SK-N-SH (cell line): ENCODE measurements at regions of chr11 and their contacts with region 1.

Region 1: GRCh38 chr11:112113539-112114457 is 27.1 kb downstream of the SDHD start:
- DNase-seq: peak; percentile 64
- H3K4me3 ChIP-seq: peak overlapping the region in 1 of 2 experiments; percentile 38; a peak in 1 of 4 replicates
- H3K27ac ChIP-seq: no peak overlapping the region
- H3K4me1 ChIP-seq: peaks cover 0 to 4% of the 10 kb centered on the region in 2 experiments; a peak in 1 of 4 replicates
- H3K27me3 ChIP-seq: no peaks in the 10 kb centered on the region
- CTCF ChIP-seq: peak; percentile 73
- EP300 ChIP-seq: no peak
- RAD21 ChIP-seq: peak; percentile 76

Region 2: DNA sequence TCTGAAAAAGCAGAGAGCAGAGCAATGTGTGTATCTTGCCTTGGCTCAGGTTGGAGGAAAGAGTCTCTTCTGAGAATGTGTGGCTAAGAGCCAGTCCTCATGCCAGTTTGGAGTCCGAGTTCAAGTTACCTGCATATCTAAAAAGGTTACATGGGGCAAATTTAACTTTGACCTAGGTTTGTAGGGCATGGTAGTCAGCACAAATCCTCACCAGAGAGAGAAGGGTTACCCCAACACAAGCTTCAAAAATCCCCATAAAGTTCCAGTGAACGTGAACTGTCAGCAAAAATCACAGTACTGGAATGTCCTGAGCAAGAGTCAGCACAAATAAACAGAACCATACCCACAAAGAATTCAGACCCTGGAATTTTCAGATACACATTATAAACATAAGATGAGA is 13.3 kb before region 1 on chr11:
- CTCF ChIA-PET with region 1: interaction called, 25 read pairs
- POLR2A ChIA-PET with region 1: no interaction called
- DNase-seq: no peak
- H3K4me3 ChIP-seq: no peak overlapping the region
- H3K27ac ChIP-seq: no peak overlapping the region
- H3K4me1 ChIP-seq: no peaks in the 10 kb centered on the region
- H3K27me3 ChIP-seq: no peaks in the 10 kb centered on the region
- CTCF ChIP-seq: no peak
- EP300 ChIP-seq: no peak
- RAD21 ChIP-seq: no peak

Region 3: DNA sequence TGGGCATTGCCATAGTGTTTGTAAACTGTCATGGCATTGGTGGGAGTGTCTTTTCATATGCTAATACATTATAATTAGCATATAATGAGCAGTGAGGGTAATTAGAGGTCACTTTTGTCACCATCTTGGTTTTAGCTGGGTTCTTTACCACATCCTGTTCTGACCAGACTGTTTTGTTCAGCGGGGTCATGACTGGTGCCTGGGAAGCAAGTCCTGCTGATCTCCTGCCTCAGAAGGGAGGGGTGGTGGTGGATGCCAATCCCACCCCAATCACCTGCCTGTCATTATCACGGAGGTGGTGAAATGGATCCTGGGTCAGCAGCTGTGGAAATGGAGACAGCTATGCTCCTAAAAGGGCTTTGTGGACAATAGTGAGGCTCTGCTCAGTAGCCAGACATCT is 18.9 kb after region 1 on chr11:
- CTCF ChIA-PET with region 1: interaction called, 15 read pairs
- POLR2A ChIA-PET with region 1: no interaction called
- DNase-seq: no peak
- H3K4me3 ChIP-seq: no peak overlapping the region
- H3K27ac ChIP-seq: no peak overlapping the region
- H3K4me1 ChIP-seq: peaks cover 5 to 11% of the 10 kb centered on the region in 2 experiments; a peak in 3 of 4 replicates
- H3K27me3 ChIP-seq: no peaks in the 10 kb centered on the region
- CTCF ChIP-seq: no peak
- EP300 ChIP-seq: no peak
- RAD21 ChIP-seq: no peak

Region 4: GRCh38 chr11:112174789-112175598 is 61.2 kb after region 1 on chr11 and contains the start of gene BCO2:
- CTCF ChIA-PET with region 1: interaction called, 30 read pairs
- POLR2A ChIA-PET with region 1: no interaction called
- DNase-seq: peak; percentile 79
- H3K4me3 ChIP-seq: peak within 1 kb of the TSS; percentile 45 to 50
- H3K27ac ChIP-seq: peak within 1 kb of the TSS; percentile 17 to 72; a peak in 3 of 4 replicates
- H3K4me1 ChIP-seq: peaks cover 6 to 10% of the 10 kb centered on the region in 2 experiments; a peak in 3 of 4 replicates
- H3K27me3 ChIP-seq: no peaks in the 10 kb centered on the region
- CTCF ChIP-seq: peak; percentile 99
- EP300 ChIP-seq: 0 out of 4 replicates have a peak, but pooled peaks of 1 of the 2 experiments have one; percentile 20
- RAD21 ChIP-seq: peak; percentile 76
- polyA plus RNA-seq, gene BCO2: 0.87 and 1.2 TPM in 2 replicates